ENCODE measurements at regions of chr6 and their contacts with region 1.

Region 1: DNA sequence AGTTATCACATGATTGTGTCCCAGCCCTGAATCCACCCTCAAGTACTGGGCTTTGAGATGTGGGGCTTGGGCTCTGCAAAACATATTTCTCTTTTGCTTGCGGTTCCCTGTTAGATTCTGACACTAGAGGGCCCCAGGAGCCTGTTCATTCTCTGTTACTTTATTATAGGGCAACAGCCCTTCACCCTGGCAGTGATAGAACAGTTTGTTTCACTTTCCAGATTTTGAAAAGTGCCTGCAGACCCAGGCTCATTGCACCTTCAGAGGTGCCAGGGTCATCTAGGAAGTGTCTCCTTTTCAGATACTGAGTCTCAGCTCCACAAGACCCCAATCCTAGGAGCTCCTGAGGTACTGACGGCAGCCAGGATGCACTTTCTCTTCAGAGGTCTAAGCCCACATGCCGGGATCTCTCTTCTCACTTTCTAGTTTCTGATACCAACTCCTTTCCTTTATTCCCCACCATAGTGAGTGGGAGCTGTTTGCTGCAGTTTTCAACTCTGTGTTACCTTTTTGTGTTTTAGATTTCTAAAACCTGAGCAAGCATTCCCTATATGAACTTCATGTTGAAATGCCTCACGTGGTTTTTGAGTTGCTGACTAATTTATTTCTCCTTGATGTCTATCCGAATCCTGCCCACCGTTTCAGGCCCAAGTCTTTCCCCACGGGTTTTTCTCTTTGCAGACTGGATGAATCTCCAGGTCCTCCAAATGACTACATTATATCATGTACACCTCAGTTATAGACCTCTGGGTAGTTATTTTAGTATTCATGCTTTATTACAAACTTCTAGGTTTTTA is 10.9 kb downstream of the ABT1 start:
- DNase-seq: peak in 1 of 2 donors; percentile 81
- ATAC-seq: peak; percentile 81 to 96 (median 93)
- H3K4me3 ChIP-seq: no peak overlapping the region
- H3K4me3 Mint-ChIP-seq: peak overlapping the region; percentile 47
- H3K27ac ChIP-seq: no peak overlapping the region
- H3K27ac Mint-ChIP-seq: no peak overlapping the region
- H3K4me1 ChIP-seq: no peaks in the 10 kb centered on the region
- H3K4me1 Mint-ChIP-seq: peaks cover 5 to 6% of the 10 kb centered on the region in 2 donors
- H3K27me3 ChIP-seq: no peaks in the 10 kb centered on the region
- H3K27me3 Mint-ChIP-seq: peaks cover 16 to 23% of the 10 kb centered on the region in 2 donors
- CTCF ChIP-seq: peak; percentile 66

Region 2: GRCh38 chr6:27078734-27079357 is 471.2 kb after region 1 on chr6:
- intact Hi-C with region 1: loop called (anchors 1 kb)
- DNase-seq: peak in 1 of 2 donors; percentile 70
- ATAC-seq: peak in 2 of 3 donors; percentile 55 to 68
- H3K4me3 ChIP-seq: no peak overlapping the region
- H3K4me3 Mint-ChIP-seq: no peak overlapping the region
- H3K27ac ChIP-seq: no peak overlapping the region
- H3K27ac Mint-ChIP-seq: no peak overlapping the region
- H3K4me1 ChIP-seq: peaks cover 3% of the 10 kb centered on the region
- H3K4me1 Mint-ChIP-seq: peaks cover 6 to 7% of the 10 kb centered on the region in 2 donors
- H3K27me3 ChIP-seq: peaks cover 6% of the 10 kb centered on the region
- H3K27me3 Mint-ChIP-seq: peaks cover 54 to 71% of the 10 kb centered on the region in 2 donors
- CTCF ChIP-seq: peak; percentile 52

Measured in natural killer cell (primary cell).